Dendritic cell treated with granulocyte-macrophage colony-stimulating factor and Interleukin-4, amounts not matched to agents 40 ng/mL and 50 ng/mL, for 4 days (primary cell): ENCODE measurements at regions of chr13 and their contacts with region 1.

Region 1: DNA sequence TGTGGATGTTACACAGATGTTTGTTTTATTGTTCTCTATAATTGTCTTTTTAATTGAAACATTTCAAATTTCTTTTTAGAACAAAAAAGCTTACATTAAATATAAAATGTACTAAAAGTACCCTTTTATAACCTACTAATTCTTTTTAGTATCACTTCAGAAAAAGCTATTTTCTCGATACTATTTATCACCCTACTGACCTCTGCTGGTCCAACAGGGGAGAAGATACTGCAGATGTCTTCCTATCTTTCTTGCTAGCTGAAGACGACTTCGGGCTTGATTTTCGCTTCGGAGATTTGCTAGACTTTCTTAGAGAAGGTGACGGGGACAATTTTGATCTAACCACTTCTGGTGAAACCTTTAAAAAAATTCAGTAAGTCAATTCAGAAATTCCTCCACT is 42.4 kb downstream of the ZC3H13 start:
- H3K4me3 Mint-ChIP-seq: no peak overlapping the region
- H3K27ac Mint-ChIP-seq: no peak overlapping the region
- H3K4me1 Mint-ChIP-seq: peaks cover 6% of the 10 kb centered on the region
- H3K27me3 Mint-ChIP-seq: no peaks in the 10 kb centered on the region

Region 2: DNA sequence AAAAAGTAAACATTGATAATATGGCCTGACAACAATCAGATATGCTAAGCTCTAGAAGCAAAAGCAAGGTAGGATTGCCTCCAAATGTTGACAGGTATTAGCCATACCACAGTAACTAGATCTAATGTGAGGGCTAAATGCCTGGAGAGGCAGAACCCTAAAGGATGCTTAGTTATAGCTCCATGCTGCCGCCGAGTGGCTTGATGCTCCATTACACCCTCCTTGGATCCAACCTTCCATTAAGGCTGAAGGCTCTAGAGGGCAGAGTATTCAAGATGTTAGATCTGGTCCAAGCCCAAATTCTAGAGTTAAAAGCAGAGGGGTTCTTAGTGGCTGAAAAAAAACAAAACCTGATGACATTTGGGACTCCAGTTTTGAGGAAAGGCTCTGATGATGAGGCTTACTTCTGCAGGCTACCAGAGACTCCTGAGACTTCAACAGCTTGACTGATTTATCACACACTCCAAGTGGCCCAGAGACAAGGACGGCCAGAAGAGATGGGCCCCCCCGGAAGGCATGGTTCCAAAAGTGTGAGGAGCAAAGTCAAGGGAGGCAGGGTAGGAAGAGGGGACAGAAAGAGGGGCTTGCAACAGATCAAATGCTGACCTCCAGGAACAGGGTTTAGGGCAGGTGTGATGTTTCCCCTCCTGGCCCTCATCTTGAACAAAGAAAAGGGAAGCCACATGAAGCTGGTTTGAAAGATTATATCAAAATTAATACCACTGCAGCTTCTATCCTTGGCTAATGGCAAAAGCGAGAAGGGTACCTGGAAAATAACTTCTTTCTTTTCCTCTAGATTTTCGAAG is 116.6 kb after region 1 on chr13:
- intact Hi-C with region 1: loop called (anchors 10 kb)
- H3K4me3 Mint-ChIP-seq: no peak overlapping the region
- H3K27ac Mint-ChIP-seq: no peak overlapping the region
- H3K4me1 Mint-ChIP-seq: peaks cover 40% of the 10 kb centered on the region
- H3K27me3 Mint-ChIP-seq: peaks cover 2% of the 10 kb centered on the region